PC-9 (cell line): ENCODE measurements at regions of chr12 and their contacts with region 1.

Region 1: GRCh38 chr12:90940872-90941499 is 14.0 kb downstream of the CCER1 start:
- DNase-seq: peak in 1 of 2 experiments; percentile 48
- H3K4me3 ChIP-seq: no peak overlapping the region
- H3K27ac ChIP-seq: no peak overlapping the region
- H3K4me1 ChIP-seq: peaks cover 16% of the 10 kb centered on the region
- H3K27me3 ChIP-seq: no peaks in the 10 kb centered on the region
- CTCF ChIP-seq: peak; percentile 83

Region 2: GRCh38 chr12:89225808-89226411 is 1715.1 kb before region 1 on chr12:
- CTCF ChIA-PET with region 1: no interaction called
- POLR2A ChIA-PET with region 1: interaction called, 11 read pairs
- intact Hi-C with region 1: no loop called
- DNase-seq: peak; percentile 69 to 98
- H3K4me3 ChIP-seq: peak overlapping the region; percentile 30; the same call in 1 of the 2 replicates
- H3K27ac ChIP-seq: peak overlapping the region; percentile 93
- H3K4me1 ChIP-seq: peaks cover 55% of the 10 kb centered on the region
- H3K27me3 ChIP-seq: no peaks in the 10 kb centered on the region
- CTCF ChIP-seq: no peak

Region 3: GRCh38 chr12:89949457-89950195 is 991.4 kb before region 1 on chr12:
- CTCF ChIA-PET with region 1: no interaction called
- POLR2A ChIA-PET with region 1: no interaction called
- intact Hi-C with region 1: loop called (anchors 10 kb)
- DNase-seq: peak in 1 of 2 experiments; percentile 77
- H3K4me3 ChIP-seq: no peak overlapping the region
- H3K27ac ChIP-seq: peak overlapping the region; percentile 43
- H3K4me1 ChIP-seq: peaks cover 49% of the 10 kb centered on the region
- H3K27me3 ChIP-seq: no peaks in the 10 kb centered on the region
- CTCF ChIP-seq: no peak

Region 4: DNA sequence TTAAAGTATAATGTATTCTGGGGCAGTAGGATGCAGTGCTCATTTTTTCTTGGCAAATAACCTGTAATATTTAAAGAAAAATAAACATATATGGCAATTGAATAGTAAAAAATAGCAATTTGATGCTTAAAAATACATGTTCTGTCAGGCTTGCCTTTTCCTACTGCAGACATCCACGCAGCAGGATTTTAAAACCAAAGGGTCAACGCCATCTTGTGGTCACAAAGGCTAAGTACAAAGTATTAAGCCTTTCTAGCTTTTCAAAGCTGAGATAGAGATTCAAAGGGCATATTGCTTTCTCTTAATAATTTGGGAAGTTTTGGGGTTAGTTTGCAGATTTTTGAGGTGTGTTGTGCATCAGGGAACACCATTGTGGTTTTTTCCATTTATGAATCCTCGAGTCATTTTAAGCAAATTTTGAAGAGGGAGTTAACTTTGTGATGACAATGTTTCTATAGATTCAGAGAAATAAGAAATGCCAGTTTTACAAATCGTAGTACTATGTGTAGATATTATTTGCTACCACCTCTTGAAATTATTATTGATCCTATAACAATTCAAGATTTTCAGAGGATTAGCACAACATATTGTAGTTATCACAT is 18.7 kb after region 1 on chr12:
- CTCF ChIA-PET with region 1: interaction called, 5 read pairs
- POLR2A ChIA-PET with region 1: interaction called, 11 read pairs
- intact Hi-C with region 1: no loop called
- DNase-seq: peak in 1 of 2 experiments; percentile 6
- H3K4me3 ChIP-seq: no peak overlapping the region
- H3K27ac ChIP-seq: no peak overlapping the region
- H3K4me1 ChIP-seq: no peaks in the 10 kb centered on the region
- H3K27me3 ChIP-seq: no peaks in the 10 kb centered on the region
- CTCF ChIP-seq: peak; percentile 67

Region 5: GRCh38 chr12:92170050-92170449 is 1229.1 kb after region 1 on chr12:
- CTCF ChIA-PET with region 1: interaction called, 10 read pairs
- POLR2A ChIA-PET with region 1: no interaction called
- intact Hi-C with region 1: no loop called
- DNase-seq: no peak
- H3K4me3 ChIP-seq: no peak overlapping the region
- H3K27ac ChIP-seq: no peak overlapping the region
- H3K4me1 ChIP-seq: no peaks in the 10 kb centered on the region
- H3K27me3 ChIP-seq: no peaks in the 10 kb centered on the region
- CTCF ChIP-seq: no peak